B cell (primary cell): ENCODE measurements at regions of chr4 and their contacts with region 1.

Region 1: GRCh38 chr4:75995727-75996126 is 5.0 kb upstream of the SDAD1 start:
- DNase-seq: peak; percentile 72
- ATAC-seq: no peak
- H3K4me3 ChIP-seq: no peak overlapping the region
- H3K4me3 Mint-ChIP-seq: no peak overlapping the region
- H3K27ac ChIP-seq: no peak overlapping the region
- H3K27ac Mint-ChIP-seq: no peak overlapping the region
- H3K4me1 ChIP-seq: peaks cover 4 to 6% of the 10 kb centered on the region in 2 donors
- H3K4me1 Mint-ChIP-seq: peaks cover 7% of the 10 kb centered on the region
- H3K27me3 ChIP-seq: no peaks in the 10 kb centered on the region
- H3K27me3 Mint-ChIP-seq: peaks cover 9% of the 10 kb centered on the region
- CTCF ChIP-seq: peak; percentile 81

Region 2: GRCh38 chr4:75015627-75016026 is 980.1 kb before region 1 on chr4:
- CTCF ChIA-PET with region 1: no interaction called
- POLR2A ChIA-PET with region 1: no interaction called
- intact Hi-C with region 1: no loop called
- DNase-seq: no peak
- ATAC-seq: no peak
- H3K4me3 ChIP-seq: no peak overlapping the region
- H3K4me3 Mint-ChIP-seq: no peak overlapping the region
- H3K27ac ChIP-seq: no peak overlapping the region
- H3K27ac Mint-ChIP-seq: no peak overlapping the region
- H3K4me1 ChIP-seq: no peaks in the 10 kb centered on the region
- H3K4me1 Mint-ChIP-seq: no peaks in the 10 kb centered on the region
- H3K27me3 ChIP-seq: no peaks in the 10 kb centered on the region
- H3K27me3 Mint-ChIP-seq: no peaks in the 10 kb centered on the region
- CTCF ChIP-seq: no peak

Region 3: GRCh38 chr4:75525910-75526309 is 469.8 kb before region 1 on chr4:
- CTCF ChIA-PET with region 1: no interaction called
- POLR2A ChIA-PET with region 1: no interaction called
- intact Hi-C with region 1: no loop called
- DNase-seq: no peak
- ATAC-seq: no peak
- H3K4me3 ChIP-seq: no peak overlapping the region
- H3K4me3 Mint-ChIP-seq: no peak overlapping the region
- H3K27ac ChIP-seq: no peak overlapping the region
- H3K27ac Mint-ChIP-seq: no peak overlapping the region
- H3K4me1 ChIP-seq: no peaks in the 10 kb centered on the region
- H3K4me1 Mint-ChIP-seq: peaks cover 2% of the 10 kb centered on the region
- H3K27me3 ChIP-seq: no peaks in the 10 kb centered on the region
- H3K27me3 Mint-ChIP-seq: no peaks in the 10 kb centered on the region
- CTCF ChIP-seq: no peak

Region 4: GRCh38 chr4:75547647-75548387 is 447.9 kb before region 1 on chr4:
- CTCF ChIA-PET with region 1: no interaction called
- POLR2A ChIA-PET with region 1: no interaction called
- intact Hi-C with region 1: no loop called
- DNase-seq: no peak
- ATAC-seq: no peak
- H3K4me3 ChIP-seq: no peak overlapping the region
- H3K4me3 Mint-ChIP-seq: no peak overlapping the region
- H3K27ac ChIP-seq: no peak overlapping the region
- H3K27ac Mint-ChIP-seq: no peak overlapping the region
- H3K4me1 ChIP-seq: no peaks in the 10 kb centered on the region
- H3K4me1 Mint-ChIP-seq: no peaks in the 10 kb centered on the region
- H3K27me3 ChIP-seq: no peaks in the 10 kb centered on the region
- H3K27me3 Mint-ChIP-seq: no peaks in the 10 kb centered on the region
- CTCF ChIP-seq: no peak

Region 5: DNA sequence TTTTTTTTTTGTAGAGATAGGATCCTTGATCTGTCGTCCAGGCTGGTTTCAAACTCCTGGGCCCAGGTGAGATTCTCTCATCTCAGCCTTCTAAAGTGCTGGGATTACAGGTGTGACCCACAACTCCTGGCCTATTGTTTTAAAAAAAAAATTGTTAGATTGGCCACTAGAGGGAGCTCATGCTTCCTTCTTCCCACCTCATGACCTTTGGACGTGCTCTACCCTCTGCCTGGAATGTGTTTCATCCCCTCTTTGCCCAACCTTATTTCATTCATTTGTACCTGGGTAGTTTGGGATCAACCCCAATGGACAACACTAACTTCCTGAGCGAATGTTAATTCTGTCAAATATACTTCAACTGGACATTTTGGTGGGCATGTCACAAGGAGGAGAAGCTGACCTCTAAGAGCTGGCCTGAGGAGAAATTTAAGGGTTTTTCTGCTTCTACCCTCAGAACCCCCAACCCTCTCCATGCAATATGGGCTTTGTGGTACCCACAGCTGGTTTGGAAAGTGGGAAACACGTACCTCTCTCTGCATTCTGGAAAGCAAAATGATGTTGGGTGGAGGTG is 99.9 kb before region 1 on chr4:
- CTCF ChIA-PET with region 1: interaction called, 17 read pairs
- POLR2A ChIA-PET with region 1: no interaction called
- intact Hi-C with region 1: loop called (anchors 2 kb)
- DNase-seq: peak; percentile 73
- ATAC-seq: peak; percentile 68
- H3K4me3 ChIP-seq: no peak overlapping the region
- H3K4me3 Mint-ChIP-seq: no peak overlapping the region
- H3K27ac ChIP-seq: no peak overlapping the region
- H3K27ac Mint-ChIP-seq: no peak overlapping the region
- H3K4me1 ChIP-seq: no peaks in the 10 kb centered on the region
- H3K4me1 Mint-ChIP-seq: no peaks in the 10 kb centered on the region
- H3K27me3 ChIP-seq: no peaks in the 10 kb centered on the region
- H3K27me3 Mint-ChIP-seq: no peaks in the 10 kb centered on the region
- CTCF ChIP-seq: peak; percentile 80

Region 6: GRCh38 chr4:76016393-76016792 is 20.7 kb after region 1 on chr4:
- CTCF ChIA-PET with region 1: interaction called, 14 read pairs
- POLR2A ChIA-PET with region 1: no interaction called
- intact Hi-C with region 1: no loop called
- DNase-seq: no peak
- ATAC-seq: no peak
- H3K4me3 ChIP-seq: no peak overlapping the region
- H3K4me3 Mint-ChIP-seq: no peak overlapping the region
- H3K27ac ChIP-seq: no peak overlapping the region
- H3K27ac Mint-ChIP-seq: no peak overlapping the region
- H3K4me1 ChIP-seq: peaks cover 19 to 23% of the 10 kb centered on the region in 2 donors
- H3K4me1 Mint-ChIP-seq: peaks cover 30% of the 10 kb centered on the region
- H3K27me3 ChIP-seq: no peaks in the 10 kb centered on the region
- H3K27me3 Mint-ChIP-seq: no peaks in the 10 kb centered on the region
- CTCF ChIP-seq: no peak

Region 7: DNA sequence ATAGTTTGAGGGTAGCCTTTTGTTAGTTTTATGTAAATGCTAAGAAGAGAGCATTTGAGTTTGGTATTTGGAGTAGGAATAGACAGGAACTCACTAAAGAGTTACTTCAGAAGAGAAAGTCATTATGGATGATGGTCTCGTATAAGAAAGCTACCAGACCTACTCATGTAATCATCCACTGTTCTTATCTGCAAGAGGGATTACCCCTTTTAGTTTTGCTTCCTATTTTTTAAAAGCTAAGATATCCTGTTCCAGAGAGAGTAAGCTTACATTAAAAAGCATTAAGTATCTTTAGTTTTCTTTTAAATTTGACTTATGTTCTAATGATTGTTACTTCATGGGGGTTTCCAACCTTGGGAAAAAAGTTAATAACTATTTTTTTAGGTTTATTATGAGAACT is 66.3 kb after region 1 on chr4:
- CTCF ChIA-PET with region 1: interaction called, 132 read pairs
- POLR2A ChIA-PET with region 1: no interaction called
- intact Hi-C with region 1: loop called (anchors 1 kb)
- DNase-seq: peak; percentile 71
- ATAC-seq: peak; percentile 96
- H3K4me3 ChIP-seq: peak overlapping the region in 1 of 5 experiments; percentile 31
- H3K4me3 Mint-ChIP-seq: peak overlapping the region; percentile 35
- H3K27ac ChIP-seq: peak overlapping the region; percentile 31 to 32
- H3K27ac Mint-ChIP-seq: peak overlapping the region; percentile 37
- H3K4me1 ChIP-seq: peaks cover 22 to 31% of the 10 kb centered on the region in 2 donors
- H3K4me1 Mint-ChIP-seq: peaks cover 29% of the 10 kb centered on the region
- H3K27me3 ChIP-seq: no peaks in the 10 kb centered on the region
- H3K27me3 Mint-ChIP-seq: no peaks in the 10 kb centered on the region
- CTCF ChIP-seq: no peak

Region 8: DNA sequence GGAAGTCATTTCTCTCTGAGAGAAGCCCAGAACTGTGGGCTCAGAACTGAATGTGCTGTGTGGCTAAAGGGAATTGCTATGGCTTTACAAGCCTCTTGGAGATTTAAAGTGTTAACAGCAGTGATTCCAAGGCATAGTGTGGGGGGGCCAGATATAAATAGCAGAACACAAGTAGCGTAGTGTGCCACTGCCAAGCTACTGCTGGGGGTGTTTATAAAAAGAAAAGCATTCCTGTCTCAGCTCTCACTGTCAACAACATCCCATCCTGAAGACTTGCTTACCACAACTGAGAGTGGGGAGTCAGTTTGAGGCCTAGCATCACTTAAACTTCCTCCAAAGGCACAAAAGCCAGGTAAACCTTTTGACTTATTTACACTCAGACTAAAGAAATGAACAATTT is 78.7 kb after region 1 on chr4 and contains the start of gene ART3:
- CTCF ChIA-PET with region 1: interaction called, 132 read pairs
- POLR2A ChIA-PET with region 1: interaction called, 4 read pairs
- intact Hi-C with region 1: no loop called
- DNase-seq: no peak
- ATAC-seq: no peak
- H3K4me3 ChIP-seq: no peak within 1 kb of the TSS
- H3K4me3 Mint-ChIP-seq: no peak within 1 kb of the TSS
- H3K27ac ChIP-seq: no peak within 1 kb of the TSS
- H3K27ac Mint-ChIP-seq: no peak within 1 kb of the TSS
- H3K4me1 ChIP-seq: no peaks in the 10 kb centered on the region
- H3K4me1 Mint-ChIP-seq: no peaks in the 10 kb centered on the region
- H3K27me3 ChIP-seq: peaks cover 0 to 5% (median 0%) of the 10 kb centered on the region in 4 experiments
- H3K27me3 Mint-ChIP-seq: peaks cover 15% of the 10 kb centered on the region
- CTCF ChIP-seq: no peak
- total RNA-seq, gene ART3: not detected in 2 replicates